ENCODE measurements at regions of chr19 and their contacts with region 1.

Region 1: GRCh38 chr19:44164673-44165512 is at the start of gene ZNF226:
- DNase-seq: peak; percentile 61 to 95 (median 82)
- ATAC-seq: peak; percentile 92
- H3K4me3 ChIP-seq: peak within 1 kb of the TSS; percentile 72 to 79
- H3K4me3 Mint-ChIP-seq: peak within 1 kb of the TSS; percentile 98
- H3K27ac ChIP-seq: peak within 1 kb of the TSS; percentile 69 to 90
- H3K27ac Mint-ChIP-seq: peak within 1 kb of the TSS; percentile 99
- H3K4me1 ChIP-seq: peaks cover 10% of the 10 kb centered on the region
- H3K4me1 Mint-ChIP-seq: peaks cover 31% of the 10 kb centered on the region
- H3K27me3 ChIP-seq: no peaks in the 10 kb centered on the region
- H3K27me3 Mint-ChIP-seq: no peaks in the 10 kb centered on the region
- CTCF ChIP-seq: no peak
- total RNA-seq, gene ZNF226: 9.1 to 10.8 TPM

Region 2: DNA sequence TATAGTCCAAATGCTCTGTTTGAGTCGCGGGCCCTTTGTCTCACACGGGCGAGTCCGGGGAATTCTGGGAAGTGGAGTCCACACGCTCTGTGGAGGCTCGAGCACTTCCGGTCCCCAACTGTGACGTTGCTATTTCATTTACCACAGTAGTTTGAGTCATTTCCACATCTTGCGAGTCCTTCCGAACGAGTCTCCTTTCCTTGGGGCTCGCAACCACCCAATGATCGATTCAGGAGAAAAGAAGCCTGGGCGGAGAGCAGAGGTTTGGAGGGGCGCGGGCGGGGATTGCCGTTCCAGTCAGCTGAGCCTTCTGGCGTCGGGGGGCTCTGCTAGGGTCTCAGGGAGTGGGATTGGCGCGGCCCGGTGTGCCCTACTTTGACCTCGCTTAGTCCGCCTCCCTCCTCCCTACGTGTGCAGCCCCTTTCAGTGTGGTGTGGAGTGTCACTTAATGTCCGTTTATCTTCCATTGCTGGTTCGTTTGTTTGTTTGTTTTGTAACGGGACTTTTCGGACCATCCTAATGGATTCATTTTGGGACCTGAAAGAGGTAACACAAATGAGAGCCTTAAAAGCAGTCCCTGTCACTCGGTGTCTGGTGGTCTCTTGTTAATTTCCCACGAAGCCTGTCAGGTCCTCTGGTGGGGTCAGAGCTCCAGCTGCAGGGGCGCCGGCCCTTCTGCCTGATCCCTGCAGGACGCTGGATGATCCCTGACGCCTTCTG is 139.5 kb before region 1 on chr19 and contains the start of gene ZNF222:
- CTCF ChIA-PET with region 1: no interaction called
- POLR2A ChIA-PET with region 1: interaction called, 4 read pairs
- intact Hi-C with region 1: loop called in 1 of 2 experiments (anchors 1 kb)
- DNase-seq: peak; percentile 34 to 89 (median 75)
- ATAC-seq: peak; percentile 97
- H3K4me3 ChIP-seq: peak within 1 kb of the TSS; percentile 84 to 92
- H3K4me3 Mint-ChIP-seq: peak within 1 kb of the TSS; percentile 95
- H3K27ac ChIP-seq: peak within 1 kb of the TSS; percentile 47 to 61
- H3K27ac Mint-ChIP-seq: peak within 1 kb of the TSS; percentile 91
- H3K4me1 ChIP-seq: peaks cover 12% of the 10 kb centered on the region
- H3K4me1 Mint-ChIP-seq: peaks cover 30% of the 10 kb centered on the region
- H3K27me3 ChIP-seq: no peaks in the 10 kb centered on the region
- H3K27me3 Mint-ChIP-seq: peaks cover 1% of the 10 kb centered on the region
- CTCF ChIP-seq: no peak
- total RNA-seq, gene ZNF222: 7.7 TPM

Region 3: GRCh38 chr19:44059229-44059628 is 105.7 kb before region 1 on chr19:
- CTCF ChIA-PET with region 1: no interaction called
- POLR2A ChIA-PET with region 1: no interaction called
- intact Hi-C with region 1: no loop called
- DNase-seq: no peak
- ATAC-seq: no peak
- H3K4me3 ChIP-seq: no peak overlapping the region
- H3K4me3 Mint-ChIP-seq: no peak overlapping the region
- H3K27ac ChIP-seq: no peak overlapping the region
- H3K27ac Mint-ChIP-seq: no peak overlapping the region
- H3K4me1 ChIP-seq: no peaks in the 10 kb centered on the region
- H3K4me1 Mint-ChIP-seq: peaks cover 6% of the 10 kb centered on the region
- H3K27me3 ChIP-seq: no peaks in the 10 kb centered on the region
- H3K27me3 Mint-ChIP-seq: no peaks in the 10 kb centered on the region
- CTCF ChIP-seq: no peak

Region 4: DNA sequence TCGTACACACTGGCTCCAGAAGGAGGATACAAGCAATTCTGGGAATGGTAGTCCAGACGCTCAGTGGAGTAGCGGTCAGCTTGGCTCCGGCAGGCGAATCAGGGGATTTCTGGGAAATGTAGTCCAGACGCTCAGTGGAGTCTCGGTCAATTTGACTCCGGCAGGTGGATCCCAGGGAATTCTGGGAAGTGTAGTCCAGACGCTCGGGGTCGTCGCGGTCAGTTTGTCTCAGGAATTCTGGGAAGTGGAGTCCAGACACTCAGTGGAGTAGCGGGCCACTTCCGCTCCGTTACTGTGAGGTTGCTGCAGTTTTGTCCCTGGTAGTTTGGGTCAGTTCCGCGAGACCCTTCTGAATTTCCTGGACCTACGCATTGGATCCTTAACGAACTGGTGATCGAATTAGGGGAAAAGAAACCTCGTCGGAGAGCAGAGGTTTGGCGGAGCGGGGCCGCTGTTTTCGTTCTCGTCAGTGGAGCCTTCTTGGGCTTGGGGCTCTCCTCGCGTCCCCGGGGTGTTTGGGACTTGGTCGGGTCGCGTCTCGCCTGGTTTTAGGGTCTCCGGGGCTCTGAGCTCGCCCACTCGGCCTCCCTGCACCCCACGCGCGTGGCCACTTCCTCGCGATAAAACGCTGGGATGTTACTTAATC is 51.6 kb before region 1 on chr19 and contains the start of gene ZNF225:
- CTCF ChIA-PET with region 1: no interaction called
- POLR2A ChIA-PET with region 1: no interaction called
- intact Hi-C with region 1: loop called (anchors 1 kb)
- DNase-seq: peak; percentile 64 to 95 (median 83)
- ATAC-seq: peak; percentile 97
- H3K4me3 ChIP-seq: peak within 1 kb of the TSS; percentile 80 to 92
- H3K4me3 Mint-ChIP-seq: peak within 1 kb of the TSS; percentile 99
- H3K27ac ChIP-seq: peak within 1 kb of the TSS; percentile 40 to 64
- H3K27ac Mint-ChIP-seq: peak within 1 kb of the TSS; percentile 93
- H3K4me1 ChIP-seq: peaks cover 14% of the 10 kb centered on the region
- H3K4me1 Mint-ChIP-seq: peaks cover 34% of the 10 kb centered on the region
- H3K27me3 ChIP-seq: no peaks in the 10 kb centered on the region
- H3K27me3 Mint-ChIP-seq: no peaks in the 10 kb centered on the region
- CTCF ChIP-seq: no peak
- total RNA-seq, gene ZNF225: 1.3 to 1.6 TPM

Region 5: DNA sequence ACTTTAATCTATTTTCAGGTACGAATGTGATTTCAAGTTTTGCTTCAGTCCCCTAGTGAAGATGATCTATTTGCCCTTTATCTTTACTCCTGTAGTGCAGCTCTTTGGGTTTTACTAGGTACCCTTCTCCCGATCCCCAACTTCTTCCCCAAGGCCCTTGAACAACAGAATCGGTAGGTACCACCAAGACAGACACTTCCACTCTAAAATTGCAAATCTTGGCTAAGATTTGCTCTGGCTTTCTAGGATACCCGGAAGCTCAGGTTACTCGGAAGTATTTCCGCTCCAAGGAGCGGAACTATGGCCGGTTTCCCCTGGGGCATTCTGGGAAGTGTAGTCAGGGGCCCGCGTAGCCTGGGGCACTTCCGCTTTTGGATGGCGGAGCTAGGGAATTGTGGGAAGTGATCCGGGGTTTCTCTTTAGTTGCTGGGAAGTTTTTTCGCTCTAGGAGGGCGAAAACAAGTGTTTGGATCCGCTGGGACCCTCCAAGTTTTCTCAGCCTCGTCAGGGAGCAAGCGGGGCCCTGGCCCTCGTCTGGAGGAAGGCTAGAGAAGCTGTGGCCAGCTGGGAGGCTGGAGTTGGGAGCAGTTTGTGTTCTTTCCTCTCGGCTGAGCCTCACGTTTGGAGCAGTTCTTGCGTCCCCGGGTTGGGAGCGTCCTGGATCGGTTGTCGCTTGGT is 42.4 kb after region 1 on chr19:
- CTCF ChIA-PET with region 1: no interaction called
- POLR2A ChIA-PET with region 1: interaction called, 13 read pairs
- intact Hi-C with region 1: loop called (anchors 1 kb)
- DNase-seq: peak; percentile 46 to 92 (median 79)
- ATAC-seq: peak; percentile 82
- H3K4me3 ChIP-seq: peak overlapping the region; percentile 72 to 84
- H3K4me3 Mint-ChIP-seq: peak overlapping the region; percentile 89
- H3K27ac ChIP-seq: peak overlapping the region; percentile 46 to 84
- H3K27ac Mint-ChIP-seq: peak overlapping the region; percentile 89
- H3K4me1 ChIP-seq: peaks cover 8% of the 10 kb centered on the region
- H3K4me1 Mint-ChIP-seq: peaks cover 11% of the 10 kb centered on the region
- H3K27me3 ChIP-seq: peaks cover 0 to 3% of the 10 kb centered on the region in 2 experiments
- H3K27me3 Mint-ChIP-seq: peaks cover 10% of the 10 kb centered on the region
- CTCF ChIP-seq: no peak

Region 6: DNA sequence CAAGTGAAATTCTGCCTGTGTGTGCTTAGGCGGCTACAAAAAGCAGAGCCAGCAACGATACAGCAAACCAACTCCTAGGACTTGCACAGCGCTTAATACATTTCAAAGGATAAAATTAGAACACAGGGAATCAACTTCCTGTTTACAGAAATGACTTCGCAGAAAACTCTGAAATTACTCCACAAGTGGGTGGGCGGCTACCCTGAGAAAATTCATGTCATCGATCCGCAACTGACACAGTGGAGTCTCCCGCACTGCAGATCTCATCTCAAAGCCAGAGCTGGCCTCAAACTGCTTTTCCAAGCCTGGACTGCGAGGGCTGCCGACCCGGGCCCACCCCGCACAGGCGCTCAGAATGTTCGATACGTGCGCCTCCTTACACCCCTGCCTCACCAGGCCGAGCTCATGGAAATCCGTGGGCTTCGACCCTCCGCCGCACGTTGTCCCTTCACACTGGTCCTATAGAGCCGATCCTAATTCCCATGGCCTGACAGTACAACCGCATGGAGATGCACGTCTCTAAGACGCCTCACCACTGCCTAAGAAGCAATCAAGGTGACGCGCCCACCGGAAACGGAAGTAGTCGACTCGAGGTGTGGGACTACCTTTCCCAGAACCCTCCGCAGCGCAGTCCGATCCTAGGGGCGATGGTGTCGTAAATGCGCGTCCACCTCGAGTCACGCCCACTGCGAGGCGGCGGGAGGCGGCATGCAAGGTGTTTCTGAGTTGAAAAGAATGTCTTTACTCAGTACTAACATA is 283.2 kb after region 1 on chr19 and contains the start of gene ZNF229:
- CTCF ChIA-PET with region 1: no interaction called
- POLR2A ChIA-PET with region 1: no interaction called
- intact Hi-C with region 1: no loop called
- DNase-seq: peak; percentile 31 to 85 (median 70)
- ATAC-seq: peak; percentile 98
- H3K4me3 ChIP-seq: peak within 1 kb of the TSS; percentile 46 to 80
- H3K4me3 Mint-ChIP-seq: peak within 1 kb of the TSS; percentile 87
- H3K27ac ChIP-seq: no peak within 1 kb of the TSS
- H3K27ac Mint-ChIP-seq: peak within 1 kb of the TSS; percentile 83
- H3K4me1 ChIP-seq: peaks cover 7% of the 10 kb centered on the region
- H3K4me1 Mint-ChIP-seq: peaks cover 14% of the 10 kb centered on the region
- H3K27me3 ChIP-seq: no peaks in the 10 kb centered on the region
- H3K27me3 Mint-ChIP-seq: peaks cover 3% of the 10 kb centered on the region
- CTCF ChIP-seq: no peak
- total RNA-seq, gene ZNF229: 0.25 to 0.76 TPM

Region 7: GRCh38 chr19:44500148-44500956 is 335.5 kb after region 1 on chr19 and contains the start of gene ZNF180:
- CTCF ChIA-PET with region 1: no interaction called
- POLR2A ChIA-PET with region 1: no interaction called
- intact Hi-C with region 1: loop called in 1 of 2 experiments (anchors 2 kb)
- DNase-seq: peak; percentile 89 to 98 (median 96)
- ATAC-seq: peak; percentile 96
- H3K4me3 ChIP-seq: peak within 1 kb of the TSS; percentile 86 to 90
- H3K4me3 Mint-ChIP-seq: peak within 1 kb of the TSS; percentile 92
- H3K27ac ChIP-seq: peak within 1 kb of the TSS; percentile 60 to 77
- H3K27ac Mint-ChIP-seq: peak within 1 kb of the TSS; percentile 92
- H3K4me1 ChIP-seq: peaks cover 21% of the 10 kb centered on the region
- H3K4me1 Mint-ChIP-seq: peaks cover 34% of the 10 kb centered on the region
- H3K27me3 ChIP-seq: no peaks in the 10 kb centered on the region
- H3K27me3 Mint-ChIP-seq: peaks cover 10% of the 10 kb centered on the region
- CTCF ChIP-seq: peak; percentile 35
- total RNA-seq, gene ZNF180: 8.5 to 8.8 TPM